Activated T-helper 2 cell treated with anti-CD3 and anti-CD28 coated beads, Interferon-gamma antibody, Interleukin-2, Interleukin-4, amounts not matched to agents 10 μg/mL and 5 μg/mL and 100 μg/mL, durations not matched to agents 14 hours and 24 hours and 36 hours (primary cell): ENCODE measurements at regions of chr2 and their contacts with region 1.

Region 1: GRCh38 chr2:215743066-215743465 is 270.3 kb downstream of the MREG start:
- DNase-seq: no peak
- H3K4me3 Mint-ChIP-seq: no peak overlapping the region
- H3K27ac Mint-ChIP-seq: peak overlapping the region; percentile 69
- H3K4me1 Mint-ChIP-seq: peaks cover 52% of the 10 kb centered on the region
- H3K27me3 Mint-ChIP-seq: no peaks in the 10 kb centered on the region

Region 2: DNA sequence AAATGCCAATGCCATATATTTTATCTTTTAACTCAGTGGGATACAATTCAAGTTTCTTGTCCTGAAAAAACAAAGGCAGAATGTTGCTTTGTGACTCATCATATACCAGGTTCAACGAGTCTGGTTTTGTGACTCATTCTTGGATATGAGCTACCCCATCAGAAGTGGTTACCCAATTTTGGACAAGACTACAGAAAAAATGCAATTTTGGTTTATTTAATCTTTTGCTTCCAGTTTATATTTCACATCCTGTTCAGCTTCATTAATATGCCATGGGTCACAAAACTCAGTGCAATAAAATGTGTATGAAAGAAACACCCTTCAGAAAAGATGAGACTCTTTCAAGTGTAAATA is 332.2 kb before region 1 on chr2:
- intact Hi-C with region 1: no loop called
- DNase-seq: no peak
- H3K4me3 Mint-ChIP-seq: no peak overlapping the region
- H3K27ac Mint-ChIP-seq: no peak overlapping the region
- H3K4me1 Mint-ChIP-seq: peaks cover 18% of the 10 kb centered on the region
- H3K27me3 Mint-ChIP-seq: peaks cover 16% of the 10 kb centered on the region

Region 3: DNA sequence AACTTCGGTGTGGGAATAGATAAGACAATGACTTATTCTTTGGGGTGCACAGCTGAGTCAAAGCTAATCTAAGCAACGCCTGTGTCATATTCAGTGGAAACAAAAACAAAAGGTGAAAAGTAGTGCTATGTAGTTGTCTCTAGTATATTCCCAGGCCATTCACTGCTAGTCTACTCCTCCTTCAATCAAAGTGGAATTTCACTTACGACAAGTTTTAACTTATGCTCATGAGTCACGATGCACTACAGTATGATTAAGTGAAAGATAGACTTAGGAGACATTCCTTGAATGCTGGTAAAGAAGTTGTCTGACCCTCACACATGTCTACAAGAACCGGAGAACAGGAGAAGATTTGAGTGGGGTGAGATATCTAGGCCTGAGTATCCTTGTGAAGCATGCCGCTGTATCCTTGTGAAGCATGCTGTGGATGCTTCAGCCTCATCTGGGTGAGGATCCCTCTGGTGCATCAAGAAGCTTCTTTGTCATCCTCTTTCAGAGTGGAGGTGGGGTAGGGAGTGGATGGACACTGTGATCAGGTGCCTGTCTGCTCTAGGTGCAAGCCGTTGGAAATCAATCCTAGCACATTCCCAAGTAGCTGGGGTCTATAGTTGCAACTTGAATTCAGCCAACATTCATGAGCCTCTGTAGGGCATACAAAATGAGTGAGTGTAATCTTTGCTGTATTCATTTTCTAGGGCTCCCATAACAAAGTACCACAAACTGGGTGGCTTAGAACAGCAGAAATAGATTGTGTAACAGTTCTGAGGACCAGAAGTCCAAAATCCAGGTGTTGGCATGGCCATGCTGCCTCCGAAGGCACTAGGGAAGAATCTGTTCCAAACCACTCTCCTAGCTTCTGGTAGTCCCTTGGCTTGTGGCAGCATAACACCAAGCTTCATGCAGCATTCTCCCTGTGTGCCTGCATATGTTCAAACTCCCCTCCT is 133.7 kb before region 1 on chr2:
- intact Hi-C with region 1: loop called (anchors 5 kb)
- DNase-seq: no peak
- H3K4me3 Mint-ChIP-seq: no peak overlapping the region
- H3K27ac Mint-ChIP-seq: no peak overlapping the region
- H3K4me1 Mint-ChIP-seq: peaks cover 5% of the 10 kb centered on the region
- H3K27me3 Mint-ChIP-seq: no peaks in the 10 kb centered on the region

Region 4: DNA sequence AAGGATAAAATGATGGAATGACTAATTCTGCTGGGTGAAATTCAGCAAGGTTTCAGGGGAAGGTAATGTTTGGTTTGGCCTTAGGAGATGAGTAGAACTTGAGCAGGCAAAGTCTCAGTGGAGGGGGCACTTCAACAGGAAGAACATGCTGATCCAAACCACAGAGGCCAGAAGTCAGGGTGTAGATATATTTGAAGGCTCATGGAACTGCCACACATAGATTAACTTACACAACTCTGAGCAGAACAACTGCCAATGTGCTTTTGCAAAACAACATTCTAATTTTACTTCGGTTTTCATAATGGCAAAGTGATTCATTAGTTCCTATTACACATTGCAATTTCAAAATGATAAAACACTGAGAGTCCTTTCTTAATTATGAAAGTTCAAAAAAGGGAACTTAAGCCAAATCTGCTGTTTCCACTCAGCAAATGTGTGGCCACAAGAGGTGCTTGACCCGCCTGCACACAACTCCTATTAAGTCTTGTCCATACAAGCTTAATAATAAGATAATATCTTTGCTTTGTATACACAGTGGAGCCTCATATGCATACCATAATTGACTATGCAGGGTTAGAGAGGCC is 14.5 kb before region 1 on chr2:
- intact Hi-C with region 1: loop called (anchors 1 kb)
- DNase-seq: no peak
- H3K4me3 Mint-ChIP-seq: no peak overlapping the region
- H3K27ac Mint-ChIP-seq: peak overlapping the region; percentile 23
- H3K4me1 Mint-ChIP-seq: peaks cover 9% of the 10 kb centered on the region
- H3K27me3 Mint-ChIP-seq: no peaks in the 10 kb centered on the region